H1 (cell line): ENCODE measurements at regions of chr14 and their contacts with region 1.

Region 1: GRCh38 chr14:56117765-56118610 is at the start of gene PELI2:
- DNase-seq: peak in 1 of 2 experiments; percentile 80
- H3K4me3 ChIP-seq: peak within 1 kb of the TSS; percentile 57 to 92 (median 72)
- H3K27ac ChIP-seq: peak within 1 kb of the TSS; percentile 53; the same call in 1 of the 2 replicates
- H3K4me1 ChIP-seq: peaks cover 5 to 14% (median 9%) of the 10 kb centered on the region in 4 experiments; a peak in 6 of 7 replicates
- H3K27me3 ChIP-seq: peaks cover 0 to 13% (median 2%) of the 10 kb centered on the region in 4 experiments; a peak in 3 of 7 replicates
- CTCF ChIP-seq: peak in 2 of 3 experiments; percentile 4 to 17; a peak in 2 of 4 replicates
- EP300 ChIP-seq: no peak
- POLR2A ChIP-seq: peak; percentile 26 to 38; a peak in 2 of 3 replicates
- RAD21 ChIP-seq: peak in 1 of 2 experiments; percentile 43; a peak in 1 of 4 replicates
- total RNA-seq, gene PELI2: 25.7 and 28.8 TPM in 2 replicates

Region 2: GRCh38 chr14:56129933-56130332 is 11.9 kb after region 1 on chr14:
- CTCF ChIA-PET with region 1: interaction called, 6 read pairs
- POLR2A ChIA-PET with region 1: interaction called, 20 read pairs
- DNase-seq: no peak
- H3K4me3 ChIP-seq: no peak overlapping the region
- H3K27ac ChIP-seq: no peak overlapping the region
- H3K4me1 ChIP-seq: peaks cover 14 to 42% (median 31%) of the 10 kb centered on the region in 4 experiments
- H3K27me3 ChIP-seq: no peaks in the 10 kb centered on the region
- CTCF ChIP-seq: no peak
- EP300 ChIP-seq: no peak
- POLR2A ChIP-seq: no peak
- RAD21 ChIP-seq: no peak

Region 3: GRCh38 chr14:56137849-56138248 is 19.9 kb after region 1 on chr14:
- CTCF ChIA-PET with region 1: no interaction called
- POLR2A ChIA-PET with region 1: interaction called, 12 read pairs
- DNase-seq: peak in 1 of 2 experiments; percentile 58
- H3K4me3 ChIP-seq: no peak overlapping the region
- H3K27ac ChIP-seq: no peak overlapping the region
- H3K4me1 ChIP-seq: peaks cover 2 to 16% (median 14%) of the 10 kb centered on the region in 4 experiments
- H3K27me3 ChIP-seq: peaks cover 0 to 1% (median 0%) of the 10 kb centered on the region in 4 experiments; a peak in 1 of 7 replicates
- CTCF ChIP-seq: no peak
- EP300 ChIP-seq: no peak
- POLR2A ChIP-seq: no peak
- RAD21 ChIP-seq: no peak

Region 4: DNA sequence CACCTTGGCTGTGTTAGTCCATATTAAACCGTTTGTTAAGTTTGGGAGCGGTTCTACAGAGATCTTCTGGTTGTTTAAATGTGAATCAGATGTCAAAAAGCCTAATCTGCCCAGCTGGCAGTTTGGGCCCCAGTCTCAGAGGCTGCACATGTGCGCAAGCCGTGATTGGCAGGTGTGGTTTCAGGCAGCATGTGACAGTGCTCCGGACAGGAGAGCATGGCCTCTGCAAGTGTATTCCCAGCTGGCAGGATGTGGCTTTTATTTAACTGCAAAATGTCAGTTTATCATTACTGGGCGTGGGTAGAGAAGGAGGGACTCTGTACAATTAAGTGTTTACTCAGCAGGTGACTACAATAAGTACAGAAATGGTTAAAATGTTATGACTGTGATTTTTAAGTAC is 77.7 kb after region 1 on chr14:
- CTCF ChIA-PET with region 1: no interaction called
- POLR2A ChIA-PET with region 1: no interaction called
- DNase-seq: no peak
- H3K4me3 ChIP-seq: no peak overlapping the region
- H3K27ac ChIP-seq: no peak overlapping the region
- H3K4me1 ChIP-seq: peaks cover 0 to 4% (median 2%) of the 10 kb centered on the region in 4 experiments; a peak in 1 of 7 replicates
- H3K27me3 ChIP-seq: no peaks in the 10 kb centered on the region
- CTCF ChIP-seq: no peak
- EP300 ChIP-seq: no peak
- POLR2A ChIP-seq: no peak
- RAD21 ChIP-seq: no peak